Heart right ventricle (tissue), 16 donors: ENCODE measurements at regions of chr19 and their contacts with region 1.

Region 1: DNA sequence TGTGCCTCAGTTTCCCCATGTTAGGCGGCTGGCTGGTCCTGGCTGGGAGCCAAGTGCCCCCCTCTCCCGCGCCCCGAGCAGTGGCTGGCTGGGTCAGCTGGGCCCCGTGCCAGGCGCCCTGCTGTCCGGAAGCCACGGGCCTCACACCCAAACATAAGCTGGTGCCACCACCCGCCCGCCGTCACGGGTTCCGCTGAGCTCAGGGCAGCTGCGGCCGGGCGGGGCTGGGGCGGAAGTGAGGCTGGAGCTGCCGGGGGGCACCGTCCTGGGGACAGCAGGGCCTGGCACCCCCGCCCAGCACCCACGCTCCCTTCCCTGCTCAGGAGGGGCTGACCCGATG is 19.3 kb downstream of the HCN2 start:
- DNase-seq: peak in 1 of 2 donors; percentile 62
- ATAC-seq: peak; percentile 35 to 76 (median 64)
- H3K4me3 ChIP-seq: no peak overlapping the region
- H3K27ac ChIP-seq: peak overlapping the region in 3 of 10 donors; percentile 39 to 82 (median 48)
- H3K4me1 ChIP-seq: peaks cover 0 to 32% (median 16%) of the 10 kb centered on the region in 9 donors
- H3K27me3 ChIP-seq: peaks cover 0 to 5% (median 0%) of the 10 kb centered on the region in 7 donors
- CTCF ChIP-seq: no peak

Region 2: GRCh38 chr19:633068-633785 is 24.3 kb after region 1 on chr19 and contains the start of gene POLRMT:
- intact Hi-C with region 1: loop called in 1 of 10 experiments (anchors 2 kb)
- DNase-seq: peak; percentile 98
- ATAC-seq: peak; percentile 92 to 98 (median 98)
- H3K4me3 ChIP-seq: peak within 1 kb of the TSS; percentile 82 to 99 (median 92)
- H3K27ac ChIP-seq: peak within 1 kb of the TSS in 9 of 10 donors; percentile 75 to 89 (median 83)
- H3K4me1 ChIP-seq: peaks cover 15 to 34% (median 21%) of the 10 kb centered on the region in 9 donors
- H3K27me3 ChIP-seq: peaks cover 0 to 1% (median 0%) of the 10 kb centered on the region in 7 donors
- CTCF ChIP-seq: peak in 6 of 9 donors; percentile 8 to 51 (median 26)
- total RNA-seq, gene POLRMT: 37.2 to 61.7 (median 45.3) TPM